GM12878 (cell line): ENCODE measurements at regions of chr7 and their contacts with region 1.

Region 1: DNA sequence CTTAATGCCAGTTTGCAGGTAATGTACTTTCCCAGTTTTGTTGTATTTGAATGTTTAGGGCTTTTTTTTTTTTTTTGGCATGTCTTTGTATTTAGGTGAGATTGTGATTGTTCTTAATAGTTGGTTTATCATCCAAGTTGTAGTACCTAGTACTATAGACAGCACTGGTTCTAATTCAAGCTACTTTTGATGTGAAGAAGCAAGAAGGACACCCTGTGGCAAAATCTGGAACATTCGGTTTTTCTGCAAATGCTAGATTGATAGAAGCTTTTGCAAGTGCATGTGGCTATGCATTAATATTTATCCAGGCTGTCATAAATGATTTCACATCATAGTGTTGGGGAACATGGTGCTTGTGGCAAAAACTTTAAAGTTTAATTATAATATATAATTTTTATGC is 248.9 kb downstream of the FOXP2 start:
- DNase-seq: peak; percentile 15
- ATAC-seq: peak; percentile 77
- H3K4me3 ChIP-seq: no peak overlapping the region
- H3K27ac ChIP-seq: no peak overlapping the region
- H3K4me1 ChIP-seq: no peaks in the 10 kb centered on the region
- H3K27me3 ChIP-seq: no peaks in the 10 kb centered on the region
- CTCF ChIP-seq: peak; percentile 30 to 55 (median 38); a peak in 5 of 6 replicates
- EP300 ChIP-seq: no peak
- POLR2A ChIP-seq: no peak
- RAD21 ChIP-seq: peak; percentile 80

Region 2: DNA sequence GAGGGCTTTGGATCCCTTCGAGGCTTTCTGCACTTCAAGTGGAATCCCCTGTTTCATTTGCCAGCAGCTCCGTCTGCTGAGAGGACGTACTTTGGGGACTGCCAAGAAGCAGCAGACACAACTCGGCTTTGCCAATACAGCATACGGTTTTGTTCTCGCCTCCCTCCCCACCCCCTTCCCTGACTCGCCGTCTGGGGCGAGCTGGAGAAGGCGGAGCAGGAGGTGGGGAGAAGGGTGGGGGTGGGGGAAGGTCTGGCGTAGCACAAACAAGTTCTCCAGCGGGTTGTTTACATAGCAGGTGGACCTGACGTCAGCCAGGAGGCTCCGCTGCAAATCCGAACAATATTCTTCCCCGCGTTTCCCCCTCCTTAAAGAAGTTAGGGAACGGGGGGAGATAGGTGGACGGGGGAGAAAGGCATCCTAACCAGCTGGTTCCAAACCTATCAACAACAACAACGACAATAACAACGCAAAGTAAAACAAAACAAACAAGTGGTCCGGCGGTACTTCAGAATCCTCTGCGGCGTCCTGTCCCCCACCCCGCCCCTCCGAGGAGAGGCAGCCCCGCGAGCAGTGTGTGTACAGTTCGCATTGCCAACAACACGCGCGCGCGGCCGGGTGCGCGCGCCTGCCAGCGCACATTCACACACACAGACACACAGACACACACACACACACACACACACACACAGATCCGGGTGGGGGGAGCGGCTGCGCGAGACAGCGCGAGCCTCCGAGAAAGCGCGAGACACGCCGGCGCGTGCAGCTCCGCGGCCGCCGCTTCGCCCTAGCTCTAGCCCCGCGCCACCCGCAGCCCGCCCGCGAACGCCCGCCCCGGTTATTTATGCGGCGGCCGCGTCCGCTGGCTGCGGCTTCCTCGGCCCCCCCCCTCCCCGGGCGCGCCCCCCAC is 577.7 kb before region 1 on chr7:
- CTCF ChIA-PET with region 1: interaction called, 6 read pairs
- POLR2A ChIA-PET with region 1: no interaction called
- RAD21 ChIA-PET with region 1: interaction called, 8 read pairs
- SMC1A ChIA-PET with region 1: interaction called, 6 read pairs
- in situ Hi-C with region 1: no loop called
- intact Hi-C with region 1: loop called (anchors 2 kb)
- DNase-seq: no peak
- ATAC-seq: peak; percentile 60
- H3K4me3 ChIP-seq: peak overlapping the region; percentile 68; the same call in 1 of the 2 replicates
- H3K27ac ChIP-seq: no peak overlapping the region
- H3K4me1 ChIP-seq: no peaks in the 10 kb centered on the region; the same call in 1 of the 2 replicates
- H3K27me3 ChIP-seq: peaks cover 6 to 36% of the 10 kb centered on the region in 2 experiments
- CTCF ChIP-seq: no peak
- EP300 ChIP-seq: no peak
- POLR2A ChIP-seq: no peak
- RAD21 ChIP-seq: no peak

Region 3: DNA sequence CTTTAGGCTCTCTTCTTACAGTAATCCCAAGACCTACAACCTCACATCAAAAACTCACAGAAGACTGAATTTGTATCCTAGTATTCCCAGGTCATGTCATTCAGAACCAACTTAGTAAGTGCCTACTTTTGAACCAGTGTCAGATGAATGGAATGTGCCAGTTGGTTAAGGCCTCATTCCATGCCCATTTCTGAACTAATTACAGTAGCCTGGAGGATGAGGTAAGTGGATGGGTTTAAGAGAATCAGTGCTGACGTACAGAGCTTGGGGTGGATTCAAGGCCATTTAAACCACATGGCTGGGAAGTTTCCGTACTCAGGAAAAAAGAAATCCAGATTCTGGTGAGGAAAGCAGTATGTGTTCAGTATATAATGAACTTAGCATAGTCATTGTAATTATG is 270.8 kb before region 1 on chr7:
- CTCF ChIA-PET with region 1: no interaction called
- POLR2A ChIA-PET with region 1: no interaction called
- RAD21 ChIA-PET with region 1: no interaction called
- SMC1A ChIA-PET with region 1: no interaction called
- in situ Hi-C with region 1: no loop called
- intact Hi-C with region 1: no loop called
- DNase-seq: no peak
- ATAC-seq: no peak
- H3K4me3 ChIP-seq: no peak overlapping the region
- H3K27ac ChIP-seq: no peak overlapping the region
- H3K4me1 ChIP-seq: no peaks in the 10 kb centered on the region
- H3K27me3 ChIP-seq: no peaks in the 10 kb centered on the region; a peak in 1 of 4 replicates
- CTCF ChIP-seq: no peak
- EP300 ChIP-seq: no peak
- POLR2A ChIP-seq: no peak
- RAD21 ChIP-seq: no peak

Region 4: GRCh38 chr7:114414156-114415063 is 249.1 kb before region 1 on chr7 and contains the start of gene FOXP2:
- CTCF ChIA-PET with region 1: interaction called, 3 read pairs
- POLR2A ChIA-PET with region 1: no interaction called
- RAD21 ChIA-PET with region 1: interaction called, 4 read pairs
- SMC1A ChIA-PET with region 1: interaction called, 4 read pairs
- in situ Hi-C with region 1: no loop called
- intact Hi-C with region 1: loop called (anchors 2 kb)
- DNase-seq: no peak
- ATAC-seq: peak; percentile 56
- H3K4me3 ChIP-seq: no peak within 1 kb of the TSS
- H3K27ac ChIP-seq: no peak within 1 kb of the TSS
- H3K4me1 ChIP-seq: no peaks in the 10 kb centered on the region
- H3K27me3 ChIP-seq: peaks cover 0 to 2% of the 10 kb centered on the region in 2 experiments; a peak in 2 of 4 replicates
- CTCF ChIP-seq: no peak
- EP300 ChIP-seq: no peak
- POLR2A ChIP-seq: no peak
- RAD21 ChIP-seq: no peak
- polyA plus RNA-seq, gene FOXP2: 0.99 to 1.2 TPM

Region 5: GRCh38 chr7:114630201-114630990 is 33.1 kb before region 1 on chr7:
- CTCF ChIA-PET with region 1: no interaction called
- POLR2A ChIA-PET with region 1: no interaction called
- RAD21 ChIA-PET with region 1: interaction called, 14 read pairs
- SMC1A ChIA-PET with region 1: interaction called, 12 read pairs
- in situ Hi-C with region 1: no loop called
- intact Hi-C with region 1: no loop called
- DNase-seq: no peak
- ATAC-seq: peak; percentile 63
- H3K4me3 ChIP-seq: no peak overlapping the region
- H3K27ac ChIP-seq: no peak overlapping the region
- H3K4me1 ChIP-seq: no peaks in the 10 kb centered on the region
- H3K27me3 ChIP-seq: no peaks in the 10 kb centered on the region
- CTCF ChIP-seq: no peak
- EP300 ChIP-seq: no peak
- POLR2A ChIP-seq: no peak
- RAD21 ChIP-seq: no peak